ENCODE measurements at regions of chr2 and their contacts with region 1.

Region 1: DNA sequence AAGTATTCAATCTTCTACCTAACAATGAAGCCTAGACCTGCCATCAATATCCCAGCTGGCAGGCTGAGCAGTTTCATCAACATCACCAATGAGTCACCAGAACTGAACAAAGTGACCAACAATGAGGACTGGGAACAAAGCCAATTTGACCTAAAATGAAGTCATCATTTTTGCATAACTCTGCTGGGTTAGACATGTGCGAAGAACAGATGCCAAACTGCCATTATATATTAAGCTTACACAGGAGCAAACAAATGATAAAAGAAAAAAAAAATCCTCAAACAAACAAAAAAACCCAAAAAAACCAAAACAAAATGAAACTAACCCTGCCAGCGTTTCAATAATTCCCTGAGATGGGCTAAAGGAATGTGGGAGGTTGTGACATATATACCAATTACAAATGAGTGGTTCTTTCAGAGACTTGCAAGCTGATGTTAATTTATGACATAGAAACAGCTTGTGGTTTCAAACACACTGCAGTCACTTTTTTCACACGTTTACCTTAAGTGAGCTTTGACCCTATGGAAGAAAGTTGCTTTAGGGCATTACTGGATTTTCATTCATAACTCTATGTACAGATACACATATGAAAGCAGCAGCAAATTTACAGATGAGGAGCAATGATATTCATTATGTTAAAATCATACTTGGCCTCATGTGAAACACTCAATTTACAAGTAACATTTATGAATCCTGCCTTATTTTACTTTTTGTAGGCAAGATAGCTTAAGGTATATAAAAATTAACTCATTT is 56.9 kb upstream of the CCDC141 start:
- DNase-seq: peak; percentile 99
- H3K4me3 ChIP-seq: no peak overlapping the region
- H3K27ac ChIP-seq: peak overlapping the region; percentile 73
- H3K4me1 ChIP-seq: peaks cover 25% of the 10 kb centered on the region
- H3K27me3 ChIP-seq: no peaks in the 10 kb centered on the region
- CTCF ChIP-seq: no peak
- POLR2A ChIP-seq: no peak

Region 2: DNA sequence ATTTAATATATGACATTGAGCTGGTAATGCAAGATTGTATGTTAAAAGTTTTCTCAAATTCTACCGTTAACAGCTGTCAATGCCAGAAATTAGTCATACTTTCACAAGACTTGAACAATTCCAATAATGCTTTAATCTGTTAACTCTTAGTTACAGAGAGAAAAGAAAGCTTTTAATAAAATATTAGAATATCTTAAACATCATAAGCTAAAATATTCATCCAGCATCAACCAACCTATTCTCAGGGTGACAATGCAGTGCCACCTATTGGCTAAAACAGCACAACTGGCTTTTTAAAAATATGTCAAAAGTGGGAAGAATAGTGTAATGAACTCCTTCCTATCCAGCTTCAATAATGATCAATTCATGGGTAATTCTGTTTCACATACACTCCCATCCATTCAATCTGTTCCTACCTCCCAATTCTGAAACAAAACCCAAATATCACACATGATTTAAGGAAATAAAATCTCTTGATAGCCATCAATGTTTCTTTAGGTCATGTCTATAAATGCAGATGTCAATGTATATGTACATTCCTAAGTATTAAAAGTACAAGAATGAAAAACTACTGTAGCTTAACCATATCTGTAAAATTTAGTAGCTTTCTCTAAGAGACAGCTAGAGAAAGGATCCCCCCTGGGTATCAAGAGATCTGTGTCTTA is 22.9 kb after region 1 on chr2:
- CTCF ChIA-PET with region 1: interaction called, 24 read pairs
- POLR2A ChIA-PET with region 1: no interaction called
- dilution Hi-C with region 1: no loop called
- intact Hi-C with region 1: no loop called
- DNase-seq: peak; percentile 35
- H3K4me3 ChIP-seq: no peak overlapping the region
- H3K27ac ChIP-seq: no peak overlapping the region
- H3K4me1 ChIP-seq: no peaks in the 10 kb centered on the region
- H3K27me3 ChIP-seq: no peaks in the 10 kb centered on the region
- CTCF ChIP-seq: peak; percentile 36 to 37
- POLR2A ChIP-seq: no peak

Region 3: GRCh38 chr2:179264368-179265081 is 157.7 kb after region 1 on chr2 and contains the start of gene SESTD1:
- CTCF ChIA-PET with region 1: no interaction called
- POLR2A ChIA-PET with region 1: no interaction called
- dilution Hi-C with region 1: no loop called
- intact Hi-C with region 1: loop called (anchors 1 kb)
- DNase-seq: peak; percentile 56
- H3K4me3 ChIP-seq: peak within 1 kb of the TSS; percentile 68 to 85 (median 76)
- H3K27ac ChIP-seq: peak within 1 kb of the TSS; percentile 31
- H3K4me1 ChIP-seq: peaks cover 22% of the 10 kb centered on the region
- H3K27me3 ChIP-seq: no peaks in the 10 kb centered on the region
- CTCF ChIP-seq: no peak
- POLR2A ChIP-seq: peak; percentile 40
- total RNA-seq, gene SESTD1: 72.4 and 79.9 TPM in 2 replicates